Head of caudate nucleus (tissue), 42 donors: ENCODE measurements at regions of chr16 and their contacts with region 1.

Region 1: DNA sequence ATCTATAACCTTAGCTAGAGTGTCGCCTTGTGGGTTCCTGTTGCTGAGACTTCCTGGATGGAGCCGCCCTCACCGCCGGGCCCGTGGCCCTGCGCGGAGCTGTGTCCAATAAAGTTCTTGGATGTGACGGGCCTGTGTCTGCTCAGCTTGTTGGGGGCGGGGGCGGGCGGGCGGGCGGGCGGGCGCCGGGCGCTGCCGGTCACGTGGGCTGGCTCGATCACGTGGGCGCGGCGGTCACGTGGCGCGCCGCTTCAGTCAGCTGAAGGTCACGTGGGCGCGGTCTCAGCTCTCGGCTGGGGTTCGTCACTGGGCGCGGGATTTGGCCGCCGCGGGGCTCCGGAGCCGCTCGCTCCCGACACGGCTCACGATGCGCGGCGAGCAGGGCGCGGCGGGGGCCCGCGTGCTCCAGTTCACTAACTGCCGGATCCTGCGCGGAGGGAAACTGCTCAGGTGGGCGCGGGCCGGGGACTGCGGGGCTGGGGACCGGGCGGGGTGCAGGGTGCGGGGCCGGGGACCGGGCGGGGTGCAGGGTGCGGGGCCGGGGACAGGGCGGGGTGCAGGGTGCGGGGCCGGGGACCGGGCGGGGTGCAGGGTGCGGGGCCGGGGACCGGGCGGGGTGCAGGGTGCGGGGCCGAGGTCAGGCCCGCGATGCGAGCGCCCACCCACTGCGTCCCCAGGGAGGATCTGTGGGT is at the start of gene AMDHD2:
- DNase-seq: peak; percentile 67 to 96 (median 89)

Region 2: GRCh38 chr16:2428051-2428783 is 92.0 kb before region 1 on chr16:
- intact Hi-C with region 1: no loop called
- DNase-seq: peak in 25 of 42 donors; percentile 5 to 61 (median 28)

Region 3: DNA sequence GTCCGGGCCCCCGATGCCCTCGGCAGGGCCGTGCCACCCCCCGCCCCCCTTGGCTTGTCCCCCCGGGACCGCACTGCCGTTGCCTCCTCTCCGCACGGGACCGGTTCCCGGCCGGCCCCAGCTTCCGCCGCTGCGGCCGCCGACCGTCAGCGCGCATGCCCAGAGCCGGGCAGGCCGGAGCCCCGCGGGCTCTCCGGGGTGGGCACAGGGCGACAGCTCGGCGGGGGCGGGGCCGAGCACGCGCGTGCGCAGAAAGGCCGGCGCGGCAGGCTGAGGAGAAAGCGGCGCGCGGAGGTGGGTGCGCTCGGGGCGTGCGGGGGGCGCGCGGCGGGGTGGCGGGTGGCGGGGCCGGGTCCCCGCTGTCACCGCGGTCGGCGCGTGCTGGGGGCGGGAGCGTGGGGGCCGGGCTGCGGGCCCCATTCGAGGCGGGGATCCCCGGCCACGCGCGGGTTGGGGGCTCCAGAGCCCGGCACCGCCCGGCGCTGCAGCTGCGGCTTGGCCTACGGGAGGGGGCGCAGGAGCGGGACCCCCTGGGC is 45.3 kb before region 1 on chr16 and contains the start of gene TBC1D24:
- intact Hi-C with region 1: no loop called
- DNase-seq: peak; percentile 46 to 94 (median 88)

Region 4: DNA sequence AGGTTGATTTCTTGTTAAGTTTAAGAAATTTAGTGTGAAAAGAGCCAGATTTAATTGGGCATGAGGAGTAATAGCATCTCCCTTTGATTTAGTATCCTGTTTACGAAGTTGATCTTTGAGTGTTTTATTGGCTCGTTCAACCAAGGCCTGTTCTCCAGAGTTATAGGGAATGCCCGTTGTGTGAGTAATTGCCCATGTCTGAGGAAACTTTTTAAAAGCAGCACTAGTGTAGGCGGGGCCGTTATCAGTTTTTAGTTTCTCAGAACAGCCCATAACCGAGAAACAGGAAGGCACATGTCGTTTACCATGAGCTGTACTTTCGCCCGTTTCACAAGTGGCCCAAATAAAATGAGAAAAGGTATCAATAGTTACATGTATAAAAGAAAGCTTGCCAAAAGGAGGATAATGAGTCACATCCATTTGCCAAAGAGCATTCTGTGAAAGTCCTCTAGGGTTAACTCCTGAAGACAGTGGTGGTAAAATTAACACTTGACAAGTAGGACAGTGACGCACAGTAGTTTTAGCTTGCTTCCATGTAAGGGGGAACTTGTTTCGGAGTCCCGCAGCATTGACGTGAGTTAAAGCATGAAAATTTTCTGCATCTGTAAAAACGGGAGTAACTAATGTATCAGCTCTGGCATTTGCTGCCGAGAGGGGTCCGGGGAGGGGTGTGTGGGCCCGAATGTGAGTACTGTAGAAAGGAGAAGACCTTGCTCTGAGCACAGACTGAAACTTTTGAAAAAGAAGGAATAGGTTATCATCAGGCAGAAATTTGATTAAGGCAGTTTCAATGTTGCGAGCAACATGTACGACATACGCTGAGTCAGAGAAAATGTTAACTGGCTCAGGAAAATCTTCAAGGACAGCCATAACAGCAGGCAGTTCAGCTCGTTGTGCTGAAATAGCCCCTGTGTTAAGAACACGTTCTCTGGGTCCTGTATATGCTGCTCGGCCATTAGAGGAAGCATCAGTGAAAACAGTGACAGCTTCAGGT is 143.6 kb after region 1 on chr16:
- intact Hi-C with region 1: loop called (anchors 10 kb)
- DNase-seq: peak in 1 of 42 donors; percentile 18